ENCODE measurements at regions of chr11 and their contacts with region 1.

Region 1: GRCh38 chr11:12950681-12951080 is 58.4 kb upstream of the RASSF10 start:
- DNase-seq: no peak
- ATAC-seq: no peak

Region 2: GRCh38 chr11:12319988-12320387 is 630.7 kb before region 1 on chr11:
- intact Hi-C with region 1: loop called (anchors 10 kb)
- DNase-seq: no peak
- ATAC-seq: no peak

Region 3: DNA sequence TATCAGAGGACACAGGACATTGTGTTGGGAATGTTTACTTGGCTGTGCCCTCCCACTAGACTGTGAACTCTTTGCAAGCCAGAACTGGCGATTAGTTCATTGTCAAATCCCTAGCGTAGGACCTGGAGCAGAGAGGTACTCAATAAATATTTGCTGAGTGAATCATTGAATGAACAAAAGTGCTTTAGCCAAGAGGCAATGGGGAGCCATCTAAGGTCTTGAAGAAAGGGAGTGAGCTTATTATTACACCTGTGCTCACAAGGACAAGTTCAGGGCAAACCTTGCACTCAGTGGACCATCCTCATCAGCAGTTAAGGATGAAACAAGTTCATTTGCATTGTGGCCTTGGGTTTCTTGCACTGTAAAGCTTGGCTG is 57.4 kb after region 1 on chr11:
- intact Hi-C with region 1: no loop called
- DNase-seq: no peak
- ATAC-seq: no peak